ENCODE measurements at regions of chr1 and their contacts with region 1.

Region 1: DNA sequence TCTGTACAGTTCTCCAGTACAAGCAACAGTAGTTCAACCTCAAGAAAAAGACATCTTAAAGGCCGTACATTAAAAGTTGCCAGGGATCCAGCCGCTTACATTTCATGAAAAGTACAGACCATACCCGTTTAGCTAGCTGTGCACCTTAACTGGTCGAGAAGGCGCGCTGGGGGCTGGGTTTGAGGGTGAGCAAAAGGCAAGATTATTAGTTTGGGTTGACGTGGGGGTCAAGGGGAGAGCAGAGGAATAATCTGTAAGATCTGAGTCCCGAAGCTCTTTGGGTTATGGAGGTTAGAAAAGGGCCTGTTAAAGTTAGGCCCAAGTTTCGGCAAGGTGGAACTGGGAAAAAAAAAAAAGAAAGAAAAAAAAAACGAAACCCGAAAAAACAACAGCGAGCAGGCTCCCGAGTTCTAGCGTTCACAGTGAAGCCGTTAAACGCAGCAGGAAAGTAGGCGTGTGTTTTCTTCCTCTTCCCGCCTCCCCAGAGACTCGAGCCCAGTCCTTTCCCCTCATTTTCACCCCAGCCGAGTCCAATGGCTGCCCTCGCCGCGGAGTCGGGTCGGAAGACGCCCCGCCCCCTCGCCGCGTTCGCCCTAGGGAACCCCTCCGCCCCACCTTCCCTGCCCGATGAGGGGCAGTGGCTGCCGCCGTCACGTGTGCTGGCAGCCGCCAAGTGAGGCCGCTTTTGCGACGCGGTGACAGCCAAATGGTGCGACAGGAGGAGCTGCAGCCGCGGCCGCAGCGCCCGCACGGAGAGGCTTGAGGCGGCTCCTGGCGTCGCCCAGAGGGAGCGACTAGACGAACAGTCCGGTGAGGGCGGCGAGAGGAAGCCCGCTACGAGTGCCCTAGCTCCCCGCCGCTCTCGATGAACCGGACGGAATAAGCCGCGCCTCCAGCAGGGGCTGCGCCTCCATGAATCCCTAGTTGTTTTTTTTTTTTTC is at the start of gene PKN2:
- DNase-seq: peak; percentile 99 to 100 (median 100)
- H3K4me3 ChIP-seq: peak within 1 kb of the TSS; percentile 84 to 100 (median 98)
- H3K27ac ChIP-seq: peak within 1 kb of the TSS; percentile 96 to 98
- H3K4me1 ChIP-seq: peaks cover 11 to 39% (median 17%) of the 10 kb centered on the region in 4 experiments
- H3K27me3 ChIP-seq: no peaks in the 10 kb centered on the region

Region 2: DNA sequence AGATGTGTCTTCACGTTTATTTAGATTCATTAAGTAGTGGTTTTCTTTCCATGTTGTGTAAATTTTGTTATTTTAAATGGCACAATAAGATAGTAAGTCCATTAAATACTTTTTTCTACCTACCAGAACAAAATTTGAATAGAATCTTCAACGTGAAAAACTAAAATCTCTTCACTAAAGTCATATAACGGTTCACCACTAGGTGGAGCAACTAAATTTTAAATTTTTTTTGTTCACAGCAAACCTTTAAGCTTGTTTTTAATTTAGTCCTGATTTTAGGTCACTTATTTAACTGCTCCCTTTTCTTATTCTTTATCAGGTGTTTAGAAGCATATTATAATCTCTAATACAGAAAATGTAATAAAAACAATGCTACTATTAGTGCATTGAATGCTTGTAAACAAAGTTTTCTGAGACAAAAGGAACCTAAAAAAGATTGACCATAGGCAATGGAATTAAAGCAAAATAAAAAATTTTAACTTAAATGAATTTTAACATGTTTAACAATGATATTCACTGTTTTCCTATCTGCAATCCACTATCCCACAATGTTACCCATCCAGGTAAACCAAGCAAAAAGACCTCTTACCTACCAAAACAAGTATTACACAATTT is 28.0 kb before region 1 on chr1:
- CTCF ChIA-PET with region 1: interaction called, 52 read pairs
- POLR2A ChIA-PET with region 1: interaction called, 4 read pairs
- DNase-seq: peak; percentile 43 to 65 (median 59)
- H3K4me3 ChIP-seq: no peak overlapping the region
- H3K27ac ChIP-seq: no peak overlapping the region
- H3K4me1 ChIP-seq: peaks cover 0 to under 1% (median 0%) of the 10 kb centered on the region in 4 experiments
- H3K27me3 ChIP-seq: no peaks in the 10 kb centered on the region

Region 3: DNA sequence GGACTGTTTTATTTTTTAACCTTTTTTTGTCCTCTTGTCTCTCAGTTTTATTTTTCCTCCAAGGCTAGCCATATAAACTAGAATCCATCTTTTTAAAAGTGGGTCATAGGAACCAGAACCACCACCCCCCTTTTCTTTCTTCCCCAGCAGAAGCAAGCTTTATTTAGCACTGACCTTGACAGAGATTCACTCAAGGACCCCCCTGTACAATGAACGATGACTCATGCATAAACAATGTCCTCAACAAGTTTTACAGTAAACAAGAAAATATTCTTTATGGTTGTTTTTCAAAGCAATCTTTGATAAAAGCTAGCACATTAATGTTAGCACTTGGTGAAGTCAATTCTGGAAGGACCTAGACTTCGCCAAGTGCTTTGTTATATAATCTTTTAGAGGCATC is 14.3 kb after region 1 on chr1:
- CTCF ChIA-PET with region 1: interaction called, 15 read pairs
- POLR2A ChIA-PET with region 1: interaction called, 7 read pairs
- DNase-seq: peak in 1 of 3 donors; percentile 22
- H3K4me3 ChIP-seq: no peak overlapping the region
- H3K27ac ChIP-seq: no peak overlapping the region
- H3K4me1 ChIP-seq: peaks cover 6 to 28% (median 20%) of the 10 kb centered on the region in 4 experiments
- H3K27me3 ChIP-seq: no peaks in the 10 kb centered on the region

Region 4: DNA sequence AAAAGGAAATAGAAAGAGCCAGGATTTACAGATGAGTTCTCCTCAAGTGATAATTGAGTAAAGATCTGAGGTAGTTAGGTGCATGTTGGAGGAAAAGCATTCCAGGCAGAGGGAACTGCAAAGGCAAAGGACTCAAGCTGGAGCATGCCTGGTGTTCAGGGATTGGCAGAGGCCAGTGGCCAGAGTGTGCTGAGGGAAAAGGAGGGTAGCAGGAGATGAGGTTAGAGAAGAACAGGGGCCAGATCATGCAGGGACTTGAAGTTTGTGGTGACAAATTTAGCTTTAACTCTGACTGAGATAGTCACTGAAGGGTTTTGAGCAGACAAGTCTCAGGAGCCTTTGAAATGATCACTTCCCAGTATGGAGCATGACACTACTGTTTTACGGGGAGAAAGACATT is 226.6 kb after region 1 on chr1:
- CTCF ChIA-PET with region 1: no interaction called
- POLR2A ChIA-PET with region 1: no interaction called
- DNase-seq: no peak
- H3K4me3 ChIP-seq: no peak overlapping the region
- H3K27ac ChIP-seq: no peak overlapping the region
- H3K4me1 ChIP-seq: peaks cover 0 to 13% (median 8%) of the 10 kb centered on the region in 4 experiments
- H3K27me3 ChIP-seq: no peaks in the 10 kb centered on the region

Measured in common myeloid progenitor, CD34-positive (primary cell).